CD8-positive, alpha-beta T cell (primary cell): ENCODE measurements at regions of chr18 and their contacts with region 1.

Region 1: DNA sequence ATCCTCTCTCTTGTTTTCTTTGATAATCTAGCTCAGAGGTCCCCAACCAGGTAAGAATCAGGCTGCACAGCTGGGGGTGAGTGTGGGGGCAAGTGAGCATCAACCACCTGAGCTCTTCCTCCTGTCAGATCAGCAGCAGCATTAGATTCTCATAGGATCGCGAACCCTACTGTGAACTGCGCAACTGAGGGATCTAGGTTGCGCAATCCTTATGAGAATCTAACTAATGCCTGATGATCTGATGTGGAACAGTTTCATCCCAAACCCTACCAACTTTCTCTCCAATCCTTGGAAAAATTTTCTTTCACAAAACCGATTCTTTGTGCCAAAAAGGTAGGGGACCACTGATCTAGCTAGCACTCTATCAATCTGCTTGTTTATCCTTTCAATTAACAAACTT is 678.3 kb downstream of the CBLN2 start:
- DNase-seq: no peak
- ATAC-seq: no peak
- H3K4me3 ChIP-seq: no peak overlapping the region
- H3K4me3 Mint-ChIP-seq: no peak overlapping the region
- H3K27ac ChIP-seq: no peak overlapping the region
- H3K27ac Mint-ChIP-seq: no peak overlapping the region
- H3K4me1 ChIP-seq: no peaks in the 10 kb centered on the region
- H3K4me1 Mint-ChIP-seq: no peaks in the 10 kb centered on the region
- H3K27me3 ChIP-seq: no peaks in the 10 kb centered on the region
- H3K27me3 Mint-ChIP-seq: no peaks in the 10 kb centered on the region
- CTCF ChIP-seq: no peak

Region 2: DNA sequence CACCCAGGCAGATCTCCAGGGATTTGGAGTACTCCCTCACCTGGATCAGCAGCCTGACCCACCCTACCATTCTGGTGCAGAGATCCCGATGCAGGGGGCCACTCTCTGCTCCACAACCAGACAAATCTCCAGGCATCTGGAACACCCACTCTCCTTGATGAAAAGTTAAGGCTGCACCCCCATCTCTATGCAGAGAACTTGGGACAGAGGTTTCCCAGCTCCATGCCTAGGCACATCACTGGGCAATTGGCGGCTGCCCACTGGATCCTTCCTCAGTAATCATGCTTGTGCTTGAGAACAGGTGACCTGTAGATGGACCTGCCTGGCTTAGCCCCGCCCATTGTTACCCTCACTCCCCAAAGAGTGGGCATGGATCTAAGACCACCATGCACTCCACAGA is 53.3 kb after region 1 on chr18:
- CTCF ChIA-PET with region 1: no interaction called
- POLR2A ChIA-PET with region 1: no interaction called
- intact Hi-C with region 1: loop called in 1 of 2 experiments (anchors 5 kb)
- DNase-seq: no peak
- ATAC-seq: no peak
- H3K4me3 ChIP-seq: no peak overlapping the region
- H3K4me3 Mint-ChIP-seq: no peak overlapping the region
- H3K27ac ChIP-seq: no peak overlapping the region
- H3K27ac Mint-ChIP-seq: no peak overlapping the region
- H3K4me1 ChIP-seq: no peaks in the 10 kb centered on the region
- H3K4me1 Mint-ChIP-seq: no peaks in the 10 kb centered on the region
- H3K27me3 ChIP-seq: no peaks in the 10 kb centered on the region
- H3K27me3 Mint-ChIP-seq: no peaks in the 10 kb centered on the region
- CTCF ChIP-seq: no peak